ENCODE measurements at regions of chr11 and their contacts with region 1.

Region 1: GRCh38 chr11:60498853-60499252 is 6.3 kb downstream of the MS4A12 start:
- DNase-seq: no peak
- CTCF ChIP-seq: no peak

Region 2: DNA sequence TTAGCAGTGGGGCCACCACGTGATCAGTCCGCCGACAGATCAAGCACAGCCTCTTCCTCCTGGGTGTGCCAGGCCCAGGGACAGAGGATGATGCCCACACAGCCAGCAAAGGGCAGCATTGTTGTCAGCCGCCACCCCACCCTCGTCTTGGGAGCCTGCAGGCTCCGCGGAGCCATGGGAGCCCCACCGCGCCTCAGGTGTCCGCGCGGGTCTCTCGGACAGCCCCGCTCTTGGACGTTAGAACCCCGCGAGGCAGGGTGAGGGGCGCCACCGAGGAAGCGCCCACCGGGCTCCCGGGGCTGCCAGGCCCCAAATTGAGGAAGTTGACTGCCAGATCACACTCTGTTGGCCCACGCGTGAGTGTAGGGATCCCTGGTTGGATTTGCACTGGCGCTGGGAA is 116.6 kb after region 1 on chr11:
- in situ Hi-C with region 1: loop called (anchors 10 kb)
- DNase-seq: no peak
- CTCF ChIP-seq: no peak

Measured in GM13977 (cell line).